ENCODE measurements at regions of chr2 and their contacts with region 1.

Region 1: DNA sequence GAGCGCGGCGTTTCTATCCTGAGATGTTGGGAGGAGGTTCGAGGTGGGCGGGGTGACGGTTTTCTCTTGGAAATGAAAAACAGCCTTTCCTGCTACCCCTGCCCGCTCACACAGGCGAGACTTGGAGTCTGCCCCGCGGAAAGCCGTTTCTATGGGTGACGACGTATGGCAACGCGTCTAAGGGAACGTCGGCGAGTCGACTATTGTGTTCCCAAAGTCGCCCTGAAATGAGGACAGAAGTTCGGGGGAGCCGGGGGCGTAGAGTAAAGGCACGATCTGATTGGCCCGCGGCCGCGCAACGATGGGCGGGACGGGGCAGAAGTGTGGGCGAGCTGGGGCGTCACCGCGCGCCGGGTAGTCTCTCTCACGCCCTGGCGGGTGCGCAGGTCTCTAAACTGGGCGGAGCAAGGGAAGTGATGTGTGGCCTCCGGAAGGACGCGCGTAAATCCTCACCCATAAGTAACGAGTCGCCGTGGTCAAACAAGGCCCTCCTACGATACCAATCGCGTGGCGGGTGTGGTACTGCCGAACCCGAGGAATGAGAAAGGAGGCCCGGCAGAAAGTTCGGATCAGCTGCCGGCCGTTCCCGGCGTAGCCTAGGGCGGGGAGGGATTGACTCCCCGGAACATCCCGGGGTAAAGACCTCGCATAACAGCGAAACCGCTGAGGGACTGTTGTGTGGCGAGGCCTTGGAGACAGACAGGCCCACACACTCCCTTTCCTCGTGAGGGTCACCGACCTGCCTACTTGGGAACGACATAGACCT is 89.6 kb downstream of the FAM161A start:
- DNase-seq: peak; percentile 97

Region 2: DNA sequence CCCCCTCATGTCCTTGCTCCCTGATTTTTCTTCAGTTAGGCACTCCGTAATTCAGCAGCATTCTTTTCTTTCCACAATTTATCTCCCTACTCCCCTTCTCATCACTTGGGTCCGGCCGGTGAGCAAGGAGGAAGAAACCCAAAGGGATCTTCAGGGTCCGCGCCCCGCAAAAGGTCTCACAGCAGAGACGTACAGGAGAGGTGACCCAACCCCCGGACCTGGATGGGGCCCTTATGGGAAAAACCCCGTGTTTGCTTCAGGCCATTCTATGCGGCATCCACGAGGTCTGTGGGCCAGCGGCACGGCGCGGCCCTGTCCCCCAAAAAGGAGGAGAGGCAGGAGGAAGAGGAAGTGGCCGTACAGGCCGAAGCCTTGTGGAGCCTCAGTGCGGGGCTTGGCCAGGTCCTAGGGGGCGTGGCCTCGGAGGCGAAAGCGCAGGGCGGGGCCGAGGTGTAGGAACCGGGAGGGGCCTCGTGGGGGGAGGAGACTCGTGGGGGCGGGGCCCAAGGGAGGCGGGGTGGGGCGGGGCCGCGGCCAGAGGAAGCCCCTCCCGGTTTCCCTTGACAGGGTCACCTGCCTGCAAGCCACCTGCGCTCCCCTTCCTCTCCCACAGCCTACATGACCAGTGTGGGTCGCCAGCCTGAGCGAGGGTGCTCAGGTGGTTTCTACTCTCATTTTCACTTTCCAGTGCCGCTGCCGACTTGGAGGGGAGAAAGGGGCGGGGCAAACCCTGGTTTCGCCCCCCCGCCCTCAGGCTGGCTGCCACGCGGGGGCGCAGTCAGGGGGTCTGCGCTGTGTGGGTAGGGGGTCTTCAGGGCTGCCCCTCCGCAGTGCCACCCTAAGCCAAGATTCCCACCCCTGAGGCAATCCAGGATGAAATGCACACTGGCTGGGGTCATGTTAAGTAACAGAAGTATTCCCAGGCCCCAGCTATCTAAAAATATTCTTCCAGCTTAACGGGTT is 69.6 kb before region 1 on chr2:
- intact Hi-C with region 1: loop called (anchors 2 kb)
- DNase-seq: peak; percentile 99

Region 3: DNA sequence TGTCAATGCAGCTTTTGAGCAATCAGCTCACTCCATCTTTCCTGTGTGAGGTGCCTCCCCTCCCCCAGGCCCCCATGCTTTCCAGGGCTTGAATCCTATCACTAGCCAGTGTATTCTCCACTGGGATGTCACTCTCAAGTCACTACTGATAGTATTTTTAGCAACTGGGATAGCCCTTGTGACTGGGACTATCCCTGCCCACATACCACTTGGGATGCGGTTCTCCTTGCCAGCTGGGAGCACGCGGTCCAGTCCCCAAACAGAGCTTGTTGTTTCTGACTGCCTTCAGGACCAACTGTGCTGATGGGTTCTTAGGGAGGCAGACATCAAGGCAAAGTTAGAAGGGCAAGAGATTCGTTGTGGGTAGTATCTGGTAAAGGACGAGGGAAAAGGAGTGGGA is 45.3 kb before region 1 on chr2:
- intact Hi-C with region 1: loop called (anchors 5 kb)
- DNase-seq: no peak

Region 4: DNA sequence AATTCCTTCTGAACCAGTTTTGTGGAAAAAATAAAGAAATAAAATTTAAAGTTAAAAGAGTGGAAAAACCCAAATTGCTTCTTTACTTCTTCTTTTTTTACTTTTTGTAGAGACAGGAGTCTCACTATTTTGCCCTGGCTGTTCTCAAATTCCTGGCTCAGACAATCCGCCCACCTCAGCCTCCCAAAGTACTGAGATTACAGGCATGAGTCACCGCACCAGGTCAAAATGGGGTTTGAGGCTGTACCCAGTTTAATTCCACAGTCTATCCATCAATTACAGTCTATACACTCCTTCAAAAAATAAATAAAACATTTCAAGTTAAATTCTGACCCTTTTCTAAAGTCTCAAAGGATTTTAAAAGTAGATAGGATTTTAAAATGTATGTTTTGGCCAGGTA is 30.7 kb before region 1 on chr2:
- intact Hi-C with region 1: no loop called
- DNase-seq: no peak

Region 5: GRCh38 chr2:61854474-61855182 is 90.4 kb after region 1 on chr2:
- intact Hi-C with region 1: no loop called
- DNase-seq: peak; percentile 90

Measured in cardiac septum (tissue), 1 donor.